Activated CD8-positive, alpha-beta memory T cell treated with anti-CD3 and anti-CD28 coated beads, Interleukin-2, amount 10 ng/mL, durations not matched to agents 7 days and 5 days (primary cell): ENCODE measurements at regions of chr7 and their contacts with region 1.

Region 1: DNA sequence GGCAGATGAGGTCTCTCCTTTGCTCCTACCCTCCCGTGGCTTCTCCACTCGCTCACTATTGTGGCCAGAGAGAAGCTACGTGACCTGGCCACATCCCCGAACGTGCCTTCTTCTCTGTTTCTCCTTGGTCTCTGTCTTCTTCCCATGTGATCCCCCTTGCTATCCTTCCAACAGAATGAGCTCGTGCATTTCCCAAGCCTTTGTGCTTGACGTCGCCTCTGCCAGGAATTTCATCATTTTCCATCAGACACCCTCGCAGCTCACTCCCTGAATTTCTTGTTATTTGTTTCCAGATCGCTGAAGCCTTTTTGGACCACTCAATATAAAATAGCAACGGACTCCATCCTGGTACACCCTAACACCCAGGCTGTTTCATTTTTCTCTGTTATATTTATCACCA is 13.8 kb upstream of the INHBA start:
- DNase-seq: no peak
- ATAC-seq: no peak
- H3K4me3 Mint-ChIP-seq: no peak overlapping the region
- H3K27ac Mint-ChIP-seq: no peak overlapping the region
- H3K4me1 Mint-ChIP-seq: no peaks in the 10 kb centered on the region
- H3K27me3 Mint-ChIP-seq: no peaks in the 10 kb centered on the region

Region 2: GRCh38 chr7:41599760-41600159 is 116.9 kb before region 1 on chr7:
- CTCF ChIA-PET with region 1: no interaction called
- DNase-seq: no peak
- ATAC-seq: no peak
- H3K4me3 Mint-ChIP-seq: no peak overlapping the region
- H3K27ac Mint-ChIP-seq: no peak overlapping the region
- H3K4me1 Mint-ChIP-seq: no peaks in the 10 kb centered on the region
- H3K27me3 Mint-ChIP-seq: no peaks in the 10 kb centered on the region

Region 3: DNA sequence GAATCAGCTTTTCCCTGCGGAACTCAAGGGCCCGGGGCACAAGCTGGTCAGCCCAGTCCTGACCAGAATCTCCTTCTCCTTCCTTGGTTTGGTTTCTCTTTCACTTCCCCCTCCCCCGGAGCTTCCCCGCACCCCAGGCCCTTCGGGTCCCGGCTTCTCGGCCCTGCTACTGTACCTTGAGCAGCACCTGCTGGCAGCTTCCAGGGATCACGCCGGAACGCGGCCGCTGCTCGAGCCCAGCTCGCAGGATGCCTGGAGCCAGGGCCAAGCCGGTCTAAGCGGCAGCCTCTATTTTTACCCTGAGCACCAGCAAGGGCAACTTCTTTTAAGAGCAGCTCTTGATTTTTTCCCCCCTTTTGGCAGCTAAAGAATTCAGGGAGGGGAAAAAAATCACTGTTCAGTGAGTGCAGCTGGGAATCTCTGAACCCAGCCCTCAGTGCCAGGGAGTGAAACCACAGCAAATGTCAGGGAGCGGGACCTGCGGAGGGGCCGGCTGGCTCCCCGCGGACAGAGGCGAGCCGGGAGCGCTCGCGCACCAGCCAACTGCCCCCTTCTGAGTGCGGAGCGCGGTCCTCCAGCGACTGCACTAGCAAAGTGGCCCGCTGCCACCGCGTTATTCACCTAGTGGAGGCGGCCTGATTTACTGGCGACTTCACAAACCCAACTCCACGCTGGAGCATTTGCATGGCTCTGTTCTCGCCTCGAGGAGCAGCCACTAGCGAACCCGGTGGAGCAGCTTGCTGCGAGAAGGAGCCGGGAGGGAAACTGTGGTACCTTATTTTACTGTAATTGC is 11.4 kb before region 1 on chr7:
- CTCF ChIA-PET with region 1: interaction called, 11 read pairs
- DNase-seq: peak; percentile 76
- ATAC-seq: peak; percentile 95
- H3K4me3 Mint-ChIP-seq: peak overlapping the region; percentile 68
- H3K27ac Mint-ChIP-seq: no peak overlapping the region
- H3K4me1 Mint-ChIP-seq: peaks cover 12% of the 10 kb centered on the region
- H3K27me3 Mint-ChIP-seq: peaks cover 51% of the 10 kb centered on the region

Region 4: DNA sequence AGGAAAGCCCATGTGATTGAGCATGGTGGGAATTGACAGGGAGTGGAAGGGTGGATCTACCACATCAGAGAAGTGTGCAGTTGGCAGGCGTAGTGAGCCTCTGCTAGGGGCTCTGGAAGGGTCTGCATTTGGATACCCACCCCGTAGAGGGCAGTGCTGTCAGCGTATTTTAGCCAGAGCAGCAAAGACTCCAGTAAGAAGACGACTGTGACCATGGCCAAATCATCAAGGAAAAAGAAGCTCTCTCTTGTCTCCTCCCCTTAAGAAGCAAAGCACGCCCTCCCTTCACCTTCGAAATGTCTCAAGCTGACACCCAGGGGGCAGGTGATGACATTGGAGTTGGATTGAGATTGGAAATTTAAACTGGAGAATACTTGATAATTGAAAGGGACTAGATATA is 55.1 kb after region 1 on chr7:
- CTCF ChIA-PET with region 1: no interaction called
- DNase-seq: no peak
- ATAC-seq: no peak
- H3K4me3 Mint-ChIP-seq: no peak overlapping the region
- H3K27ac Mint-ChIP-seq: no peak overlapping the region
- H3K4me1 Mint-ChIP-seq: no peaks in the 10 kb centered on the region
- H3K27me3 Mint-ChIP-seq: no peaks in the 10 kb centered on the region